ENCODE measurements at regions of chr11 and their contacts with region 1.

Region 1: GRCh38 chr11:70755410-70756161 is 357.3 kb downstream of the CTTN start:
- DNase-seq: peak; percentile 89
- ATAC-seq: peak; percentile 98

Region 2: DNA sequence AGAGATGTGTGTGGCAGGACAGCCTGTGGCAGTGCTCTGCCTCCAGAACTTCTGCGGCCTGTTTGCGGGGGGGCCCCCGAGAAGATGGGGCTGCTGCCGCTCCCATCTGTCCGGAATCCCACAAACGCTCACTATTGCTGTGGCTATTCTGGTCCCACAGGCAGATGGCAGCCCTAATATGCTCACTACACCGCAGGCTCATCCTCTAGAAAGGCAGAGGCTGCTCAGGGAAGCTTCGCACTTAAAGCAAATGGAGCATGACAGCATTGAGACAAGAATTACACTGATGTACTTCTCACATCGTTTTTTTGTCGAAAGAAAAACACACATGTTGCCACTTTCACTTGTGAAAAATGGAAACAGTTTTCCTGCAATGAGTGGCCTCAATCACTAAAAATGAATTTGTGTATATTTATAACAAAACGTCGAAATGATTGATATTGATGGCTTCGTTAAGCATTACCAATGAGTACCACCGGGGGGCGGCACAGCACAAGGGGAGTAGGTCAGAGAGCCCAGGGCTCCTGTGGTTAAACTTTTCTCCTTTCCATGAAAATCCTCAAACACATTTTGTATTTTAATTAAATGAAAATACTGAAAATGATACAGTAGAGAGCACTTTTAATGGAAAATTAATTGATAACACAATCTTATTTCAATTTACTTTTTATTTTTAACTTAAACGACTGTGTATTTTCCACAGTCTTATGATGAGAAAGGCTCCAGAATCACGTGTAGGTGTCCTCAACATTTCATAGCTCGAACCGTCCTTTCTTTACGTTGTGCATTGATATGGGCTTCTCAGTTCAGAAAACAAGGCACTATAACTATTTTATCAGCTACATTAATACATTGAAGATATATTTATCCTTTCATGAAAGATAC is 288.1 kb before region 1 on chr11:
- intact Hi-C with region 1: loop called (anchors 2 kb)
- DNase-seq: peak; percentile 74
- ATAC-seq: peak; percentile 53

Region 3: DNA sequence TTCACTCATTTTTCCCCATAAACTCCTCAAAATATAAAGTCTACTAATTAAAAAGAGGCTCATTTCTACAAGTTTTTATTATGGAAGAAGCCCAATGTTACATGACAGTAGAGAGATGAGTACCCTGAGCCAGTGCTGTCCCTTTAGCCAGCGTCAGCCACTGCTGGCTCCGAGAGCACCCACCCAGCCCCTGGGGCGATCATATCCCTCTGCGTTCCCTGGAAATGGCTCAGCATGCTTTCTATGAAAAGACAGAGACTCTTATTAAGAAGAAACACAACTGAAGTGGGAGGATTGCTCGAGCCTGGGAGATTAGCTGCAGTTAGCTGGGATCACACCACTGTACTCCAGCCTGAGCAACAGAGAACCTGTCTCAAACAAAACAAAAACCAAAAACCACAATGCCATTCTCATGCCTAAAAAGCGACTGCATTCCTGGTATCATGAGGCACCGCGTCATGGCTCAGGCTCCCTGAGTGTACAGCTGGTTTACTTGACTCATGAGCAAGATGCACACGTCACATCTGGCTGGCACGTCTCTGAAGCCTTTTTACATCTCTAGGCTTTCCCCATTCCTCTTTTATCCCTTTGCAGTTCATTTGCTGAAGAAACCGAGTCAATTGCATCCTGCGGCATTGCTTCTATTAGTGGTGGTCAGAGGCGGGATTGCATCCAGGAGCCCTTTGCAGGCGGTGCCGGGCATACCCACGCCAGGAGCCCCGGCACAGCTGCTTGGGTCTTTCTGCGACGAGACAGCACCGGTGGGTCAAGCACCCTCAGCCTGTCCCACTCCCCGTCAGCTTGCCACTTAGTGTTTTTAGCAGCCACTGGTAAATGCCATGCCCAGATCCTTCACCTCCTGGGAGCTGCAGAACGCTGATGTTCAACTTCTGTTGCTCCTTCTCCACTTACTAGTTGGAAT is 237.3 kb before region 1 on chr11:
- intact Hi-C with region 1: no loop called
- DNase-seq: peak; percentile 21
- ATAC-seq: no peak

Region 4: GRCh38 chr11:71170676-71171423 is 415.3 kb after region 1 on chr11:
- intact Hi-C with region 1: no loop called
- DNase-seq: no peak
- ATAC-seq: no peak

Measured in left ventricle myocardium superior (tissue), 1 donor.